CD8-positive, alpha-beta T cell (primary cell): ENCODE measurements at regions of chr7 and their contacts with region 1.

Region 1: GRCh38 chr7:73726083-73726466 is 6.6 kb upstream of the STX1A start:
- DNase-seq: no peak
- ATAC-seq: peak; percentile 16
- H3K4me3 ChIP-seq: no peak overlapping the region
- H3K4me3 Mint-ChIP-seq: no peak overlapping the region
- H3K27ac ChIP-seq: no peak overlapping the region
- H3K27ac Mint-ChIP-seq: no peak overlapping the region
- H3K4me1 ChIP-seq: no peaks in the 10 kb centered on the region
- H3K4me1 Mint-ChIP-seq: no peaks in the 10 kb centered on the region
- H3K27me3 ChIP-seq: peaks cover 0 to 6% of the 10 kb centered on the region in 2 experiments
- H3K27me3 Mint-ChIP-seq: peaks cover 11% of the 10 kb centered on the region
- CTCF ChIP-seq: no peak

Region 2: GRCh38 chr7:73612598-73613269 is 113.3 kb before region 1 on chr7:
- CTCF ChIA-PET with region 1: interaction called, 145 read pairs
- POLR2A ChIA-PET with region 1: no interaction called
- intact Hi-C with region 1: loop called (anchors 1 kb)
- DNase-seq: no peak
- ATAC-seq: no peak
- H3K4me3 ChIP-seq: no peak overlapping the region
- H3K4me3 Mint-ChIP-seq: no peak overlapping the region
- H3K27ac ChIP-seq: no peak overlapping the region
- H3K27ac Mint-ChIP-seq: no peak overlapping the region
- H3K4me1 ChIP-seq: no peaks in the 10 kb centered on the region
- H3K4me1 Mint-ChIP-seq: no peaks in the 10 kb centered on the region
- H3K27me3 ChIP-seq: peaks cover 0 to 4% of the 10 kb centered on the region in 2 experiments
- H3K27me3 Mint-ChIP-seq: peaks cover 27% of the 10 kb centered on the region
- CTCF ChIP-seq: no peak

Region 3: DNA sequence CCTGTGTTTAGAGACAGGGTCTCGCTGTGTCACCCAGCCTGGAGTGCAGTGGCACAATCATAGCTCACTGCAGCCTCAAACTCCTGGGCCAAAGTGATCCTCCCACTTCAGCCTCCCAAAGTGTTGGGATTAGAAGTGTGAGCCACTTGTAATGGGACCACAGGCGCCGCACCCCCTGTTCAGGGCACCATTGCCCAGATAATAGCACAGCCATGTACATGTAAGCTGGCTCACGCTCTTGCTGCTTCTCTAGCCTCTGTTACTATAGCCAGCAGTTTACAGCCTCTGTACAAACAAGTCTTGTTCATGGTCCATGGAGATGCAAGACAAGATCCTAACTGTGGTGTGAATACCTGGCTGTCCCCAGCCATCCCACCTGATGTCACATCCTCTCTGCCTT is 97.6 kb before region 1 on chr7:
- CTCF ChIA-PET with region 1: interaction called, 10 read pairs
- POLR2A ChIA-PET with region 1: no interaction called
- intact Hi-C with region 1: no loop called
- DNase-seq: no peak
- ATAC-seq: no peak
- H3K4me3 ChIP-seq: no peak overlapping the region
- H3K4me3 Mint-ChIP-seq: no peak overlapping the region
- H3K27ac ChIP-seq: no peak overlapping the region
- H3K27ac Mint-ChIP-seq: no peak overlapping the region
- H3K4me1 ChIP-seq: peaks cover 5% of the 10 kb centered on the region
- H3K4me1 Mint-ChIP-seq: peaks cover 8% of the 10 kb centered on the region
- H3K27me3 ChIP-seq: peaks cover 20 to 27% of the 10 kb centered on the region in 2 experiments
- H3K27me3 Mint-ChIP-seq: peaks cover 41% of the 10 kb centered on the region
- CTCF ChIP-seq: no peak

Region 4: DNA sequence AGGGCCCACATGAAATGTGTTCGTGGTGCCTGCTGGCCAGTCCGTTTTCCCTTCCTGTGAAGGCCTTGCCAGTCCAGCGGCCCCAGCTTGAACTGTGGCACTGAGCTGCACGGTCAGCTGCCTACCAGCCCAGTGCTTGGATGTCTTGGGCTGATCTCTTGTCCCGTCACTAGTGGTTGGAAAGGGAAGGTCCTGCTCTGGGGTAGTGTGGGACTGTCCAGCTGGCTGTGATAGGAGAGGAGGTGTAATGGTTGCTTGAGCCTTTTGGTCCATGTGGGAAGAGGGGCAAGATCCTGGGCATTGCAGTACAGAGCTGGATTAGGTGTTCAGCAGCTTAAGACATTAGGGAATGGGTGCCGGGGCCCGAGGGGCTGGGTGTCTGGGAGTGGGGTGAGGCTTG is 27.7 kb before region 1 on chr7:
- CTCF ChIA-PET with region 1: interaction called, 12 read pairs
- POLR2A ChIA-PET with region 1: no interaction called
- intact Hi-C with region 1: no loop called
- DNase-seq: no peak
- ATAC-seq: no peak
- H3K4me3 ChIP-seq: no peak overlapping the region
- H3K4me3 Mint-ChIP-seq: no peak overlapping the region
- H3K27ac ChIP-seq: no peak overlapping the region
- H3K27ac Mint-ChIP-seq: no peak overlapping the region
- H3K4me1 ChIP-seq: peaks cover 1% of the 10 kb centered on the region
- H3K4me1 Mint-ChIP-seq: peaks cover 3% of the 10 kb centered on the region
- H3K27me3 ChIP-seq: no peaks in the 10 kb centered on the region
- H3K27me3 Mint-ChIP-seq: no peaks in the 10 kb centered on the region
- CTCF ChIP-seq: no peak